Activated CD4-positive, alpha-beta memory T cell treated with anti-CD3 and anti-CD28 coated beads for 36 hours (primary cell): ENCODE measurements at regions of chr13 and their contacts with region 1.

Region 1: GRCh38 chr13:45340926-45341750 is at the start of gene TPT1:
- DNase-seq: peak; percentile 100
- H3K4me3 Mint-ChIP-seq: peak within 1 kb of the TSS; percentile 94
- H3K27ac Mint-ChIP-seq: peak within 1 kb of the TSS; percentile 99
- H3K4me1 Mint-ChIP-seq: peaks cover 45% of the 10 kb centered on the region
- H3K27me3 Mint-ChIP-seq: no peaks in the 10 kb centered on the region
- total RNA-seq, gene TPT1: 3,227 to 3,264 TPM

Region 2: GRCh38 chr13:44988973-44989817 is 351.9 kb before region 1 on chr13 and contains the starts of genes GPALPP1 and NUFIP1:
- CTCF ChIA-PET with region 1: no interaction called
- POLR2A ChIA-PET with region 1: no interaction called
- intact Hi-C with region 1: no loop called
- DNase-seq: peak; percentile 96
- H3K4me3 Mint-ChIP-seq: peak within 1 kb of the TSS; percentile 97
- H3K27ac Mint-ChIP-seq: peak within 1 kb of the TSS; percentile 92
- H3K4me1 Mint-ChIP-seq: peaks cover 58% of the 10 kb centered on the region
- H3K27me3 Mint-ChIP-seq: no peaks in the 10 kb centered on the region
- total RNA-seq, gene GPALPP1: 30.1 to 32.7 TPM
- total RNA-seq, gene NUFIP1: 9.3 to 9.5 TPM

Region 3: DNA sequence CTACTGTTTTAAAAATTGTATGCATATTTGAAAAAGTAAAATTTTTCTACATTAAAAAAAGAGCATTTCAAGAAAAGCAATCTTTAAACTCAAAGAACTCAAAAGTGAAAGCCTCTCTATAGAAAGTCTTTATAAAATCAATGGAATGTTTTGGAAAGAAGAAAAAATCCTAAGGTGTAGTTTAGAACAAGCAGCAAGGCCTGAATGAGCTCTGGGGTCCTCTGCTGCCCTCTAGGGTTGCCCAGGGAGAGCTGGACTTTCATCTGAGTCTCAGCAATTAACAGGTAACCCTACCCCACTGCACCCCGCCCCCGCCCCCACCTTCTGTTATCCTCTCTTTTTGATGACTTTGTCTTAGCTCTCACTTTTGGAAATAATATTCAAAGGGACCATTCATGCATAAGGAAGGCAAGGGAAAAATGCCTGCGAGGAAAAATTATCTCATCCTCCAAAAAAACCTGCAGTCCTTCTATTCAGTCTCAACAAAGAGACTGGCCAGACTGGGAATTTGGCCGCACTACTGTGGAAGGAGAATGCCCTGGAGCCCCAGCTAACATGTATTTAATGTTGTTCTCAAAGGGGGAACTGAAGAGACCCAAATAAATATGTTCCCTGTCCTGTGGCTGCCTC is 52.9 kb after region 1 on chr13:
- CTCF ChIA-PET with region 1: interaction called, 10 read pairs
- POLR2A ChIA-PET with region 1: interaction called, 15 read pairs
- intact Hi-C with region 1: loop called (anchors 1 kb)
- DNase-seq: peak; percentile 47
- H3K4me3 Mint-ChIP-seq: no peak overlapping the region
- H3K27ac Mint-ChIP-seq: no peak overlapping the region
- H3K4me1 Mint-ChIP-seq: peaks cover 46% of the 10 kb centered on the region
- H3K27me3 Mint-ChIP-seq: no peaks in the 10 kb centered on the region

Region 4: DNA sequence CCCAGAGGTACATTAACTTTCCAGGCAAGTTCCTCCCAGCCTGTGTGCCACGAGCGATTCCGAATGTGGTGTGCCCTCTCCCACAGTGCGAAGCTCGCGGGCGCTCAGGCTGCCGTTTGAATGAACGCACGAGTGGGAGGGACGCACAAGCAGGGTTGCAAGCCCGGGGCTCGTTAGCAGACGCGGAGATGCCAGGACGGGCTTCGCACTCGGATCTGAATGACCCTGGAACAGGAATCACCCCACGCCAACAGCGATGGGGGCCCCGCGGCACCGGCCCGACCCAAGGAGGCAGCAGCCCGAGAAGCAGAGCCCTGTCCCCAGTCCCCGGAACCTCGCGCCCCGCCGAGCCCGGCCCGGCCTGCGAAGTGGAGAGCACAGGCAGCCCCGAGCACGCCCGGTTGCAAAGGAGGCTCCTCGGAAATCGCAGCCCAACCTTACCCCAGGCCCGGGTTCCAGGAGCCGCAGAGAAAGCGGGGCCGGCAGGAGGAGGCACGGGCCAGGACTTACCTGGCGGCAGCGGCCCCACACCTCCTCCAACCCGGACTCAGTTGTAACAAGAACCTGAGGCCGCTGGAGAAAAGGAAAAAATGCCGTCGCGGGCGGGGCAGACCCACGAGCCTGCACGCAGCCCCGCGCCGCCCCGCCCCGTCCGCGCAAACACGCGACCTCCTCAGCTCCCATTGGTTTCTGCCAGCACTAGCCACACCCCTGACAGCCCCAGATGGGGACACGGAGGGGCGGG is 76.8 kb after region 1 on chr13 and contains the start of gene SLC25A30:
- CTCF ChIA-PET with region 1: interaction called, 5 read pairs
- POLR2A ChIA-PET with region 1: interaction called, 16 read pairs
- intact Hi-C with region 1: loop called (anchors 1 kb)
- DNase-seq: peak; percentile 93
- H3K4me3 Mint-ChIP-seq: peak within 1 kb of the TSS; percentile 84
- H3K27ac Mint-ChIP-seq: peak within 1 kb of the TSS; percentile 88
- H3K4me1 Mint-ChIP-seq: peaks cover 16% of the 10 kb centered on the region
- H3K27me3 Mint-ChIP-seq: no peaks in the 10 kb centered on the region
- total RNA-seq, gene SLC25A30: 14.6 to 15.3 TPM

Region 5: GRCh38 chr13:45441633-45442032 is 100.5 kb after region 1 on chr13:
- CTCF ChIA-PET with region 1: no interaction called
- POLR2A ChIA-PET with region 1: no interaction called
- intact Hi-C with region 1: no loop called
- DNase-seq: peak; percentile 45
- H3K4me3 Mint-ChIP-seq: no peak overlapping the region
- H3K27ac Mint-ChIP-seq: no peak overlapping the region
- H3K4me1 Mint-ChIP-seq: peaks cover 9% of the 10 kb centered on the region
- H3K27me3 Mint-ChIP-seq: no peaks in the 10 kb centered on the region

Region 6: GRCh38 chr13:45473627-45474026 is 132.5 kb after region 1 on chr13:
- CTCF ChIA-PET with region 1: no interaction called
- POLR2A ChIA-PET with region 1: no interaction called
- intact Hi-C with region 1: no loop called
- DNase-seq: peak; percentile 28
- H3K4me3 Mint-ChIP-seq: no peak overlapping the region
- H3K27ac Mint-ChIP-seq: no peak overlapping the region
- H3K4me1 Mint-ChIP-seq: peaks cover 50% of the 10 kb centered on the region
- H3K27me3 Mint-ChIP-seq: no peaks in the 10 kb centered on the region

Region 7: DNA sequence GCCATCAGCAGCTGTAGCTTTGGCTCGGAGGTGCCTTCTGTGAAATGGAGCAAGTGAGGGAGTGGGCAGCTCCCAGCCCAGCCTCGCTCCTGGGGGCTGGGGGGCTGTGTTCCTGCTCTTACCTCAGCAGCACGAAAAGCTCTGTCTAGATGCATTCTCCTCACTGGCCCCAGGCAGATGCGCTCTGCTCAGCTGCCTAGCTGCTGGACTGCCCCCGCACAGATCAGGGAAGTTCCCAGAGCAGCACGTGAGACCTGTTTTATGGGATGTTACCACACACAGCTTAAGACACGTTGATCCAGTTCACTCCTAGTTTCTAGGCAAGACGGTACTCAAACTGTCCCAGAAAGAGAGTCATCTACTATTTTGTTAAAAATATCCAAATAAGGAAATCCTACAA is 827.2 kb after region 1 on chr13:
- CTCF ChIA-PET with region 1: no interaction called
- POLR2A ChIA-PET with region 1: no interaction called
- intact Hi-C with region 1: loop called (anchors 5 kb)
- DNase-seq: peak; percentile 83
- H3K4me3 Mint-ChIP-seq: peak overlapping the region; percentile 69
- H3K27ac Mint-ChIP-seq: peak overlapping the region; percentile 86
- H3K4me1 Mint-ChIP-seq: peaks cover 95% of the 10 kb centered on the region
- H3K27me3 Mint-ChIP-seq: no peaks in the 10 kb centered on the region